PC-9 (cell line): ENCODE measurements at regions of chr14 and their contacts with region 1.

Region 1: DNA sequence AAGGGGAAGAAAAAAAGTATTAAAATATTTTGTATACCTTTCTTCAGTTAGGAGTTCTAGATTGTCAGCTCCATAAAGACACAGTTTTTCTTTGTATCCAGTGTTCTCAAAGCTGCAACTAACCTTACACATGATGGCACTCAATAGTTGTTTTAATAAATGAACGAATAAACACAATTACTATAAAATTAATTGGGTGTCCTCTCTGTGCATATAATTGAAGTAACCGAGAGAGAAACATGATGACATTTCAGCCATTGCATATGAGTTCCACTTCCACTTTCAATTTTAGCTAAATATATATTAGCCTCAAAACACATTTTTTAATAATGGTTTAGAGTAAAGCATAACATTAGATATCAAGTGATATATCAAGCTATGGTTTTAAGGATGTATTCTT is 671.2 kb downstream of the LRFN5 start:
- DNase-seq: no peak
- H3K4me3 ChIP-seq: no peak overlapping the region
- H3K27ac ChIP-seq: no peak overlapping the region
- H3K4me1 ChIP-seq: no peaks in the 10 kb centered on the region
- H3K27me3 ChIP-seq: no peaks in the 10 kb centered on the region
- CTCF ChIP-seq: no peak

Region 2: GRCh38 chr14:42884100-42884499 is 606.3 kb after region 1 on chr14:
- CTCF ChIA-PET with region 1: no interaction called
- POLR2A ChIA-PET with region 1: interaction called, 11 read pairs
- intact Hi-C with region 1: no loop called
- DNase-seq: peak; percentile 8 to 46
- H3K4me3 ChIP-seq: no peak overlapping the region
- H3K27ac ChIP-seq: peak overlapping the region; percentile 50; the same call in 1 of the 2 replicates
- H3K4me1 ChIP-seq: peaks cover 9% of the 10 kb centered on the region; the same call in 1 of the 2 replicates
- H3K27me3 ChIP-seq: no peaks in the 10 kb centered on the region
- CTCF ChIP-seq: no peak